Body of pancreas (tissue), 4 donors: ENCODE measurements at regions of chr12 and their contacts with region 1.

Region 1: GRCh38 chr12:130871286-130872178 is at the start of gene RAN:
- DNase-seq: peak; percentile 92 to 94 (median 94)
- ATAC-seq: peak; percentile 96
- H3K4me3 ChIP-seq: peak within 1 kb of the TSS; percentile 23 to 71
- H3K27ac ChIP-seq: peak within 1 kb of the TSS; percentile 78 to 89 (median 83)
- H3K4me1 ChIP-seq: peaks cover 27% of the 10 kb centered on the region
- H3K27me3 ChIP-seq: no peaks in the 10 kb centered on the region
- CTCF ChIP-seq: peak in 1 of 7 experiments; percentile 18
- POLR2A ChIP-seq: peak; percentile 43 to 68 (median 65)
- total RNA-seq, gene RAN: 79.1 to 115 TPM

Region 2: GRCh38 chr12:130826149-130826801 is 45.3 kb before region 1 on chr12:
- intact Hi-C with region 1: loop called (anchors 10 kb)
- DNase-seq: peak; percentile 37 to 61 (median 45)
- ATAC-seq: peak; percentile 71
- H3K4me3 ChIP-seq: no peak overlapping the region
- H3K27ac ChIP-seq: peak overlapping the region in 3 of 4 donors; percentile 40 to 68 (median 60)
- H3K4me1 ChIP-seq: peaks cover 6% of the 10 kb centered on the region
- H3K27me3 ChIP-seq: no peaks in the 10 kb centered on the region
- CTCF ChIP-seq: peak in 6 of 7 experiments; percentile 35 to 67 (median 51)
- POLR2A ChIP-seq: no peak